Activated CD8-positive, alpha-beta T cell treated with anti-CD3 and anti-CD28 coated beads for 36 hours (primary cell): ENCODE measurements at regions of chr2 and their contacts with region 1.

Region 1: GRCh38 chr2:203706403-203706802 is at the start of gene CD28:
- DNase-seq: peak; percentile 97
- ATAC-seq: peak; percentile 75
- H3K4me3 Mint-ChIP-seq: peak within 1 kb of the TSS; percentile 92
- H3K27ac Mint-ChIP-seq: peak within 1 kb of the TSS; percentile 97
- H3K4me1 Mint-ChIP-seq: peaks cover 42% of the 10 kb centered on the region
- H3K27me3 Mint-ChIP-seq: no peaks in the 10 kb centered on the region
- CTCF ChIP-seq: no peak
- total RNA-seq, gene CD28: 94.2 to 97.3 TPM

Region 2: GRCh38 chr2:203535078-203535783 is 171.2 kb before region 1 on chr2 and contains the start of gene RAPH1:
- CTCF ChIA-PET with region 1: interaction called, 3 read pairs
- POLR2A ChIA-PET with region 1: interaction called, 3 read pairs
- intact Hi-C with region 1: loop called (anchors 10 kb)
- DNase-seq: peak; percentile 72
- ATAC-seq: peak; percentile 66
- H3K4me3 Mint-ChIP-seq: peak within 1 kb of the TSS; percentile 73
- H3K27ac Mint-ChIP-seq: peak within 1 kb of the TSS; percentile 11
- H3K4me1 Mint-ChIP-seq: peaks cover 19% of the 10 kb centered on the region
- H3K27me3 Mint-ChIP-seq: peaks cover 39% of the 10 kb centered on the region
- CTCF ChIP-seq: no peak
- total RNA-seq, gene RAPH1: 1.5 to 1.9 TPM

Region 3: DNA sequence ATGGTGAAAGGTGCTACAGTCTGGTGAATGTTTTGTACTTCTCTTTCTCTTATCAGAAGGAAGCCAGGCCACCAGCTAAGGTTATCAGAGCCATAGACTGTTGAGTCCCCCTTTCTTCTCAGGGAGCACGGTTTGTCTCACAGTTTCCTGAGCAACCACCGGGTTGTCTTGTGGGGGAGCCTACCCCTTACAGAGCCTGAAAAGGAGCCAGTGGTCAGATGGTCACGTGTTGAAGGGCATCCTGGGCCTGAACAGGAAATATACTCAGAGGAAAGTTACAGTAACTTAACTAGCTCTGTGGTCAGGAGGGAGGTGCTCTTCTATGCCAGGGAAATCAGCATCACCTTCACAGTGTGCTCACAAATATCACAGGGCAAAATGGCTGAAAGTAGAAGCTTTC is 11.7 kb after region 1 on chr2:
- CTCF ChIA-PET with region 1: interaction called, 8 read pairs
- POLR2A ChIA-PET with region 1: interaction called, 89 read pairs
- intact Hi-C with region 1: no loop called
- DNase-seq: peak; percentile 90
- ATAC-seq: peak; percentile 80
- H3K4me3 Mint-ChIP-seq: peak overlapping the region; percentile 43
- H3K27ac Mint-ChIP-seq: peak overlapping the region; percentile 88
- H3K4me1 Mint-ChIP-seq: peaks cover 96% of the 10 kb centered on the region
- H3K27me3 Mint-ChIP-seq: no peaks in the 10 kb centered on the region
- CTCF ChIP-seq: no peak

Region 4: GRCh38 chr2:203740780-203741281 is 34.4 kb after region 1 on chr2:
- CTCF ChIA-PET with region 1: interaction called, 8 read pairs
- POLR2A ChIA-PET with region 1: interaction called, 160 read pairs
- intact Hi-C with region 1: loop called (anchors 2 kb)
- DNase-seq: peak; percentile 66
- ATAC-seq: peak; percentile 64
- H3K4me3 Mint-ChIP-seq: peak overlapping the region; percentile 54
- H3K27ac Mint-ChIP-seq: peak overlapping the region; percentile 99
- H3K4me1 Mint-ChIP-seq: peaks cover 88% of the 10 kb centered on the region
- H3K27me3 Mint-ChIP-seq: no peaks in the 10 kb centered on the region
- CTCF ChIP-seq: no peak

Region 5: GRCh38 chr2:203804070-203804469 is 97.7 kb after region 1 on chr2:
- CTCF ChIA-PET with region 1: no interaction called
- POLR2A ChIA-PET with region 1: interaction called, 12 read pairs
- intact Hi-C with region 1: no loop called
- DNase-seq: peak; percentile 72
- ATAC-seq: peak; percentile 47
- H3K4me3 Mint-ChIP-seq: no peak overlapping the region
- H3K27ac Mint-ChIP-seq: peak overlapping the region; percentile 88
- H3K4me1 Mint-ChIP-seq: peaks cover 87% of the 10 kb centered on the region
- H3K27me3 Mint-ChIP-seq: no peaks in the 10 kb centered on the region
- CTCF ChIP-seq: no peak

Region 6: GRCh38 chr2:203830304-203831055 is 124.1 kb after region 1 on chr2:
- CTCF ChIA-PET with region 1: no interaction called
- POLR2A ChIA-PET with region 1: no interaction called
- intact Hi-C with region 1: no loop called
- DNase-seq: peak; percentile 84
- ATAC-seq: peak; percentile 94
- H3K4me3 Mint-ChIP-seq: peak overlapping the region; percentile 31
- H3K27ac Mint-ChIP-seq: peak overlapping the region; percentile 96
- H3K4me1 Mint-ChIP-seq: peaks cover 17% of the 10 kb centered on the region
- H3K27me3 Mint-ChIP-seq: no peaks in the 10 kb centered on the region
- CTCF ChIP-seq: no peak

Region 7: GRCh38 chr2:203934041-203934492 is 227.7 kb after region 1 on chr2:
- CTCF ChIA-PET with region 1: no interaction called
- POLR2A ChIA-PET with region 1: interaction called, 46 read pairs
- intact Hi-C with region 1: no loop called
- DNase-seq: peak; percentile 81
- ATAC-seq: peak; percentile 50
- H3K4me3 Mint-ChIP-seq: peak overlapping the region; percentile 60
- H3K27ac Mint-ChIP-seq: peak overlapping the region; percentile 95
- H3K4me1 Mint-ChIP-seq: peaks cover 58% of the 10 kb centered on the region
- H3K27me3 Mint-ChIP-seq: no peaks in the 10 kb centered on the region
- CTCF ChIP-seq: no peak

Region 8: GRCh38 chr2:204072443-204073324 is 366.3 kb after region 1 on chr2:
- CTCF ChIA-PET with region 1: no interaction called
- POLR2A ChIA-PET with region 1: no interaction called
- intact Hi-C with region 1: no loop called
- DNase-seq: peak; percentile 82
- ATAC-seq: peak; percentile 79
- H3K4me3 Mint-ChIP-seq: no peak overlapping the region
- H3K27ac Mint-ChIP-seq: no peak overlapping the region
- H3K4me1 Mint-ChIP-seq: peaks cover 2% of the 10 kb centered on the region
- H3K27me3 Mint-ChIP-seq: peaks cover 7% of the 10 kb centered on the region
- CTCF ChIP-seq: peak; percentile 93